ENCODE measurements at regions of chr11 and their contacts with region 1.

Region 1: DNA sequence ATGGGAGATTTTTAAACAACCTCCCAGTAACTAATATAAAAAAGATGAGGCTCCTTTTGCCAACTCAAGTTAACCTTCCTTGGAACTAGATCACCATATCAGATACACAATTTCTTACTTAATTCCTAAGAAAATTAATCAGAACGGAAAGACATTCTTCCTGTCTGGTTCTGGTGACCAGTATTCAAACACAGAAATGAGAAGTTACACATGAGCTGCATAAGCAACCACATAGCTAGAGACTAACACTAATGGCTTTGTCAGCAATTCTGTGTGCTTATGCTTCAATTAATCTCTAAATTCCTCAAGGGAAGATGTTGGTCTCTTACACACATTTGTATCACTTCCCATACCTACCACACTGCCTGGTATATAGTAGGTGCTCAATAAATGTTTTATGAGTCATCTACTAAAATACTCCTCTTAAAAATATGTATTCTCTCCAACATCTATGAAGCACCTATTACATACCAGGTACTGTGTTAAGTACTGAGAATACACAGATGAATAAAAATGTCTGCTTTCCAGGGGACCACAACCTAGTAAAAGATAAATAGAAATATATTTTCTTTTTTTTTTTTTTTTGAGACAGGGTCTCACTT is 54.5 kb downstream of the GAB2 start:
- DNase-seq: no peak
- ATAC-seq: no peak
- H3K4me3 ChIP-seq: no peak overlapping the region
- H3K4me3 Mint-ChIP-seq: no peak overlapping the region
- H3K27ac ChIP-seq: no peak overlapping the region
- H3K27ac Mint-ChIP-seq: no peak overlapping the region
- H3K4me1 ChIP-seq: no peaks in the 10 kb centered on the region
- H3K4me1 Mint-ChIP-seq: peaks cover 26% of the 10 kb centered on the region
- H3K27me3 ChIP-seq: no peaks in the 10 kb centered on the region
- H3K27me3 Mint-ChIP-seq: no peaks in the 10 kb centered on the region
- CTCF ChIP-seq: no peak

Region 2: DNA sequence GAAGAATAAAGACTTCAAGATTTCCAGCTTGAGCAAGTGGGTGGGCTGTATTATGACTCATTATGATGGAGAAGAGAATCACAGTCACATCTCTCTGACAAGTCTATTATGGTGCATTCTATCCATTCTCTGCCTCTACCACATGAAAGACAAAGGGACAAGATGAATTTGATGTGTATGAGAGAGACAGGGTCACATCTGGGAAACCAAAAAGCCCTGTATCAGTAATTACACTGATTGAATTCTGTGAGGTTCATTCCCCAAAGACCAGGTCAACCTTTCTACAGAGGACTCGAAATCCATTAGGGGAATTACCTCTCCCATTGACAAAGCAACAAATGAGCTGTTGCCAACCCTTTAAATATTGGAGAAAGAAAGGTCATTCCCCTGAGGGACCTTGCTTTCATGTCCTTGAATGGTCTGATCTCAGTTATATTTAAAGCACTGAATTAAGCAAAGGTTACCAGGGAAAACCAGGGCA is 64.8 kb before region 1 on chr11:
- CTCF ChIA-PET with region 1: no interaction called
- POLR2A ChIA-PET with region 1: no interaction called
- intact Hi-C with region 1: no loop called
- DNase-seq: no peak
- ATAC-seq: no peak
- H3K4me3 ChIP-seq: no peak overlapping the region
- H3K4me3 Mint-ChIP-seq: no peak overlapping the region
- H3K27ac ChIP-seq: no peak overlapping the region
- H3K27ac Mint-ChIP-seq: no peak overlapping the region
- H3K4me1 ChIP-seq: peaks cover 0 to 5% of the 10 kb centered on the region in 2 donors
- H3K4me1 Mint-ChIP-seq: peaks cover 27% of the 10 kb centered on the region
- H3K27me3 ChIP-seq: no peaks in the 10 kb centered on the region
- H3K27me3 Mint-ChIP-seq: no peaks in the 10 kb centered on the region
- CTCF ChIP-seq: no peak

Region 3: DNA sequence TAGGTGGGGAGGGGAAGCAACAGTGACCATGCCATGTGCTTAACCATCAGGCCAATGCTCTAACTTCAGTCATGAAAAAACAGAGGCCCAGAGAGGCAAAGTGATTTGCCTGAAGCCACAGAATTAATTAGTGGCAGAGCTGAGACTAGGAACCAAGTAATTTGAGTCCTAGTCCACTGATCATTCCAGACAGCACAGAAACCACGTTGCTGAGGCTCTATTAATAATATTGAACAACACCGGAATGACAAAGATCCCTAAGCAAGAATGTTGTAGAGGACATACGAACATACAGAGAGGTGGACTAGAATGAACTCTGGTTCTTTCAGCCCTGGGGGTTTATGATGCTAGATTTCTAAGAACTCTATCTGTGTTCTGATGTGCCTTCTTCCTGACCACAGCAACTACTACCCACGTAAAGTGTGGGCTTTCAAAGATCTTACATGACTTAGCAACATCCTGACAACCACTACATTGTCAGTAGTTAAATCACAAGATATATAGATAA is 37.8 kb before region 1 on chr11:
- CTCF ChIA-PET with region 1: no interaction called
- POLR2A ChIA-PET with region 1: no interaction called
- intact Hi-C with region 1: loop called (anchors 5 kb)
- DNase-seq: no peak
- ATAC-seq: no peak
- H3K4me3 ChIP-seq: no peak overlapping the region
- H3K4me3 Mint-ChIP-seq: no peak overlapping the region
- H3K27ac ChIP-seq: no peak overlapping the region
- H3K27ac Mint-ChIP-seq: no peak overlapping the region
- H3K4me1 ChIP-seq: peaks cover 18 to 26% of the 10 kb centered on the region in 2 donors
- H3K4me1 Mint-ChIP-seq: peaks cover 65% of the 10 kb centered on the region
- H3K27me3 ChIP-seq: no peaks in the 10 kb centered on the region
- H3K27me3 Mint-ChIP-seq: no peaks in the 10 kb centered on the region
- CTCF ChIP-seq: no peak

Region 4: GRCh38 chr11:78338138-78338537 is 25.0 kb before region 1 on chr11:
- CTCF ChIA-PET with region 1: no interaction called
- POLR2A ChIA-PET with region 1: no interaction called
- intact Hi-C with region 1: no loop called
- DNase-seq: no peak
- ATAC-seq: no peak
- H3K4me3 ChIP-seq: no peak overlapping the region
- H3K4me3 Mint-ChIP-seq: no peak overlapping the region
- H3K27ac ChIP-seq: no peak overlapping the region
- H3K27ac Mint-ChIP-seq: no peak overlapping the region
- H3K4me1 ChIP-seq: no peaks in the 10 kb centered on the region
- H3K4me1 Mint-ChIP-seq: peaks cover 48% of the 10 kb centered on the region
- H3K27me3 ChIP-seq: no peaks in the 10 kb centered on the region
- H3K27me3 Mint-ChIP-seq: no peaks in the 10 kb centered on the region
- CTCF ChIP-seq: no peak

Region 5: GRCh38 chr11:78460471-78460870 is 97.4 kb after region 1 on chr11:
- CTCF ChIA-PET with region 1: no interaction called
- POLR2A ChIA-PET with region 1: no interaction called
- intact Hi-C with region 1: no loop called
- DNase-seq: no peak
- ATAC-seq: no peak
- H3K4me3 ChIP-seq: no peak overlapping the region
- H3K4me3 Mint-ChIP-seq: no peak overlapping the region
- H3K27ac ChIP-seq: no peak overlapping the region
- H3K27ac Mint-ChIP-seq: no peak overlapping the region
- H3K4me1 ChIP-seq: peaks cover 8 to 11% of the 10 kb centered on the region in 2 donors
- H3K4me1 Mint-ChIP-seq: peaks cover 26% of the 10 kb centered on the region
- H3K27me3 ChIP-seq: no peaks in the 10 kb centered on the region
- H3K27me3 Mint-ChIP-seq: no peaks in the 10 kb centered on the region
- CTCF ChIP-seq: no peak

Measured in B cell (primary cell).